Activated CD8-positive, alpha-beta T cell treated with anti-CD3 and anti-CD28 coated beads for 36 hours (primary cell): ENCODE measurements at regions of chr1 and their contacts with region 1.

Region 1: DNA sequence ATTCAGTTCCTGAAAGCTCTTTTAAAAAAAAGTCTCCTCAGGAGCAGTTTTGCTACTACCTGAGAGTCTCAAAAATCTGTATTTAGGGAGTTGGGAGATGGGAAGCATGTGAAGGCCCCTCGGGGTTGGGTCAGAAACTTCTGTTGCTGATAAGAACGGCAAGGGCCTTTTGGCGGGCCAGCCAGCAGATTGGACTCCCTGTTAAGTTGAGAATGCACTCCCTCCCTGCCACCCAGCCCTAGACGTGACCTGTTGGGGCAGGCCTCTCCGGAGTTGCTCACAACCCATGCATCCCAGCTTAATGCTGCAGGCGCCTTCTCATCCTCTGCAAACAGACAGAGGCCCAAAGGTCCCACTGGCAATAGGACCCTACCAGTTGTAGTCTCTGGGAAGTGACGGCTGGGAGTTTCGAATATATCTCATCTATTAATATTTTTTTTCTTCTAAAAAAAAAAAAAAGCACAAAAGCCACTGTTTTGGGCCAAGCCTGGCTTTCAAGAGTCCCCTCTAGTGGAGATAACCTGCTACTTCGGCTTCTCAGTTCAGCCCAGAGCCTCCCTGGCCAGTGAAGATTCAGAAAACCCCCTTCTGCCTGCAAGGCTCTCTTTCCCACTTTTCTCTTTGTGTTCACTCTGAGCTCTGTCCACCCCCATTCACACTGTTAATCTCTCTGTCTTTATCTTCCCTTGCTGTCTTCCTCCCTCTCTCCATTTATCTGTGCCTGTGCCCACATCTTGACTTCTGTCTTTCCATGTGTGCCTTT is 5.3 kb downstream of the PLXNA2 start:
- DNase-seq: peak; percentile 21
- ATAC-seq: peak; percentile 54
- H3K4me3 Mint-ChIP-seq: no peak overlapping the region
- H3K27ac Mint-ChIP-seq: no peak overlapping the region
- H3K4me1 Mint-ChIP-seq: peaks cover 12% of the 10 kb centered on the region
- H3K27me3 Mint-ChIP-seq: peaks cover 44% of the 10 kb centered on the region
- CTCF ChIP-seq: peak; percentile 68

Region 2: DNA sequence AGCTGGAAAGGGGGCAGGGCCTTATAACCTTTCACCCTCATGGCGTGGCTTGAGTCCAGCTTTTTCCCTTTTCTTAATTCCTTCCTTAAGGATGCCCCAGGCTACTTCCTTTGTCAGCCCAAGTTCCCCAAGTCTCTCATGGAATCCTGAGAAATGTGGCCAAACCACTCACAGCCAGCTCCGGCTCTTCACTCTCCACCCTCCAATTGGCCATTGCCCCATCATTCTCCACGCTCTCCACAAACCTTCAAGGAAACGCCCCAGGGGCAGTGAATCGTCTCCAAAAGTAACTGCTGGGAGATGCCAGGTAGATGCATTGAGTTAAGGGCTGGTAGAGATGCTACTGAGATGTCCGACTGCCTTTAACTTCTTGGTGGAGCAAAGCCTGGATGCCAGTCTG is 214.5 kb before region 1 on chr1:
- CTCF ChIA-PET with region 1: interaction called, 65 read pairs
- POLR2A ChIA-PET with region 1: interaction called, 3 read pairs
- intact Hi-C with region 1: no loop called
- DNase-seq: no peak
- ATAC-seq: no peak
- H3K4me3 Mint-ChIP-seq: no peak overlapping the region
- H3K27ac Mint-ChIP-seq: no peak overlapping the region
- H3K4me1 Mint-ChIP-seq: no peaks in the 10 kb centered on the region
- H3K27me3 Mint-ChIP-seq: no peaks in the 10 kb centered on the region
- CTCF ChIP-seq: no peak

Region 3: GRCh38 chr1:208132287-208132883 is 106.5 kb before region 1 on chr1:
- CTCF ChIA-PET with region 1: interaction called, 10 read pairs
- POLR2A ChIA-PET with region 1: no interaction called
- intact Hi-C with region 1: loop called (anchors 2 kb)
- DNase-seq: peak; percentile 81
- ATAC-seq: peak; percentile 93
- H3K4me3 Mint-ChIP-seq: no peak overlapping the region
- H3K27ac Mint-ChIP-seq: no peak overlapping the region
- H3K4me1 Mint-ChIP-seq: peaks cover 4% of the 10 kb centered on the region
- H3K27me3 Mint-ChIP-seq: peaks cover 16% of the 10 kb centered on the region
- CTCF ChIP-seq: peak; percentile 92

Region 4: DNA sequence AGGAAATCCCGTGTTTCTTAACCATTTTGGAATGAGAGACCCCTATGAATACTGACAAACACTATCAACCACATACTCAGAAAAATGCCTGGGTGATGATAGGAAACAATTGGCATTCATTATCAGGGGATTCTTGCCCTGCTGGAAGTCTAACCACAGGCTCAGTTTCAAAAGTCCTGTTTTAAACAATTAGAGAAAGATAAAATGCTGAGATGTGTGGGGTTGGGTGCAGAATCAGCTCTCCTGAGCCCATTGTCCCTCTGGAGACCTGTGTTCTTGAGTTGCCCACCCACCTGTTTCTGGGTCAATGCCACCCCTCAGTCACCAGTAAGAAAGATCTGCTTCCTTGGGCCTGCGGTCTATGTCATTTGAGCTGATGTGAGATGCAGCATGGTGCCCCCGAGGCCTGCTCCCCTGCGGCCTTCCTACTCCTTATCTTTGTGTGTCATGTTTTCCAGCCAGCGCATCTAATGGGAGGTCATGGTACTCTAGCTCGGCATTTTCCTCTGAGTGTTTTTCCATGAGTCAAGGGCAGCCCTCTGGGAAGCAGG is 135.6 kb after region 1 on chr1:
- CTCF ChIA-PET with region 1: no interaction called
- POLR2A ChIA-PET with region 1: no interaction called
- intact Hi-C with region 1: no loop called
- DNase-seq: no peak
- ATAC-seq: no peak
- H3K4me3 Mint-ChIP-seq: no peak overlapping the region
- H3K27ac Mint-ChIP-seq: no peak overlapping the region
- H3K4me1 Mint-ChIP-seq: no peaks in the 10 kb centered on the region
- H3K27me3 Mint-ChIP-seq: peaks cover 8% of the 10 kb centered on the region
- CTCF ChIP-seq: no peak